ENCODE measurements at regions of chr12 and their contacts with region 1.

Region 1: DNA sequence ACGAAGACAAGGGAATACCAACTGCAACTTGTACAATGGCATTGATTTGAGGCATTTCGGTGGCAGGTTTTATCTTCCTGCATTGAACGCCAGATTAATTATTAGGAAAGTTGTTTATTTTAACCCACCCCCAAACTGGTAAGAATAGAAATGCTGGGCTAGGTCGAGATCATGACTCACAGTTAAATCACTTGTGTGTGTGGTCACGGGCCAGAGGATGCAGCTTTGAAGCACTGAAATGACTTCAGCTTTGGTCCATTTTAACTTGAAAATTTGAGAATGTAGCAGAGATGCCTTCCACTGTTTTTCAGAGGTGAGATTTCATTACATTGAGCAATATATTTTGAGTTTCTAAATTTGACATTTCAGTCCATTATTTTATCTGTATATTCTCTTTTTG is 23.6 kb upstream of the KCNH3 start:
- DNase-seq: no peak
- H3K4me3 ChIP-seq: no peak overlapping the region
- H3K27ac ChIP-seq: no peak overlapping the region
- H3K4me1 ChIP-seq: no peaks in the 10 kb centered on the region
- H3K27me3 ChIP-seq: no peaks in the 10 kb centered on the region
- CTCF ChIP-seq: no peak
- EP300 ChIP-seq: no peak
- POLR2A ChIP-seq: no peak

Region 2: DNA sequence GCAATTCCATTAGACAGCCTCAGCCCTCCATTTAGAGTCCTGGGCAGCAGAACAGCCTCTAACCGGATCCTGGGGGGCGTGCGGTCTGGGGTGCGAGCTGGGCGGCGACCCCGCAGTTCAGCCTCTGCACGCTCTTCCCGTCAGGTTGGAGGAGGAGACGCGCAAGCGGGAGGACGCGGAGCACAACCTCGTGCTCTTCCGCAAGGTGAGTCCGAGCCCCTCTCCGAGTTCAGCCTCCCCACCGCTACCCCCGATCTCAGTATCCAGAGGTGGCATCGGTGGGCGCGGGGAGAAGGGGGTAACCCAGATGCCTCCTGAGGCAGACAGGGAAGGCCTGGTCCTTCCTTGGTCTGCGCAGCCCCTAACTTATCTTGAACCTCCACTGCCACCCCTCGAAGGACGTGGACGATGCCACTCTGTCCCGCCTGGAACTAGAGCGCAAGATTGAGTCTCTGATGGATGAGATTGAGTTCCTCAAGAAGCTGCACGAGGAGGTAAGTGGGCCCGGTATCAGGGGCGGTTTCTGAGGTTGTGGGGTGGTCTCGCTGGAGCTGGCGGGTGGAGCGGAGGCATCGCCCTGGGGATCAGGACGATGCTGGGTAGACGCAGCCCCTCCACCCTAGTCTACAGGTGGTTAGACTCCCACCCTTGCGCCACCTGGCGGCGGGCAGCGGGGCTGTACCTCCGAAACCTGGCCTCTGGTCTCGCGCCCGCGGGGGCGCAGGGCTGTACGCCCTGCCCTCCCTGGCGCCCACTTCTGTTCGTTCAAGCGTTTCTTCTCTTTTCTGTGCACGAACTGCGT is 219.0 kb before region 1 on chr12:
- intact Hi-C with region 1: loop called in 2 of 4 experiments (anchors 10 kb)
- DNase-seq: peak in 2 of 5 donors; percentile 44 to 60
- H3K4me3 ChIP-seq: no peak overlapping the region
- H3K27ac ChIP-seq: no peak overlapping the region
- H3K4me1 ChIP-seq: peaks cover 8% of the 10 kb centered on the region
- H3K27me3 ChIP-seq: peaks cover 5% of the 10 kb centered on the region
- CTCF ChIP-seq: peak in 1 of 3 donors; percentile 34
- EP300 ChIP-seq: no peak
- POLR2A ChIP-seq: no peak

Region 3: DNA sequence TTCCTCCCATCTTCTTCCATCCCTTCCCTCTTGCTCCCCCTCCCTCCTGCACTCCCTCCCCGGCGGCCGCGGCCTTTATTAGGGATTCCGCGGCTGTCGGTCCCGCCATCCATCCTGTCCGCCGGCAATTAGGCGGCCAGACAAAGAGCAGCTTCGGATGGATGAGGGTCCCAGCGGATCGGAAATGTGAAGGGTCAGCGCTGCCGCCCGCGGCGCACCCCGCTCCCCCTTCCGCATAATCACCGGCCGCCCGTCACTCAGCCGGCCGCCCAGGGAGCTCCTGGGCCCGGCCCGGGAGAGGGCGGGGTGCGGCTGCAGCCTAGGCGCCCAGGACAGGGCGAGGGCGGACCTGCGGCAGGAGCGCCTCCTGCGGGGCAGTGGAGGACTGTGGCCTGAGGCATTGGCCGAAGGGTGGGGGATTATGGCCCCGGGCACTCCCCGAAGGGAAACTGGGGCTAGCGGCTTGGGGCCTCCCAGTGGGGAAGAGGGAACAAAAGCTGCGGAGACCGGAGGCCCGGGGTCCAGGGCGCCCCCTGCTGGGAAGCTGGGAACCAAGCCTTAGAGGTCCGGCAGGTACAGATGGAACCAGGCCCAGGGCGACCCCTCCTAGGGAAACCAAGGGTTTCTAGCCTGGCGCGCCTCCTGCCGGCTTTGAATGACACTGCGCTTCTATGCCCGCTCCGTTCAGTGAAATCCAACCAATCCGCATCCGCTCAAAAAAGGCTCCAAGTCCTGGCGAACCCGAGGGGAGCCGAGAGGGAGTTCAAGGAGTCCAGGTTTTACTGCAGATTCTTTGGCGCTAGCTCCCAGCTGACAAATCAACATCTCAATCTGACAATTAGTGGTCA is 173.0 kb before region 1 on chr12:
- intact Hi-C with region 1: loop called in 2 of 4 experiments (anchors 5 to 10 kb)
- DNase-seq: peak; percentile 68 to 85 (median 80)
- H3K4me3 ChIP-seq: peak overlapping the region; percentile 48
- H3K27ac ChIP-seq: no peak overlapping the region
- H3K4me1 ChIP-seq: peaks cover 8% of the 10 kb centered on the region
- H3K27me3 ChIP-seq: peaks cover 7% of the 10 kb centered on the region
- CTCF ChIP-seq: peak; percentile 64 to 67 (median 64)
- EP300 ChIP-seq: no peak
- POLR2A ChIP-seq: no peak

Region 4: GRCh38 chr12:49347384-49348237 is 167.7 kb before region 1 on chr12:
- intact Hi-C with region 1: loop called in 2 of 4 experiments (anchors 5 to 10 kb)
- DNase-seq: peak; percentile 63 to 84 (median 76)
- H3K4me3 ChIP-seq: peak overlapping the region; percentile 9
- H3K27ac ChIP-seq: no peak overlapping the region
- H3K4me1 ChIP-seq: peaks cover 16% of the 10 kb centered on the region
- H3K27me3 ChIP-seq: peaks cover 22% of the 10 kb centered on the region
- CTCF ChIP-seq: peak; percentile 63 to 74 (median 70)
- EP300 ChIP-seq: no peak
- POLR2A ChIP-seq: no peak

Region 5: DNA sequence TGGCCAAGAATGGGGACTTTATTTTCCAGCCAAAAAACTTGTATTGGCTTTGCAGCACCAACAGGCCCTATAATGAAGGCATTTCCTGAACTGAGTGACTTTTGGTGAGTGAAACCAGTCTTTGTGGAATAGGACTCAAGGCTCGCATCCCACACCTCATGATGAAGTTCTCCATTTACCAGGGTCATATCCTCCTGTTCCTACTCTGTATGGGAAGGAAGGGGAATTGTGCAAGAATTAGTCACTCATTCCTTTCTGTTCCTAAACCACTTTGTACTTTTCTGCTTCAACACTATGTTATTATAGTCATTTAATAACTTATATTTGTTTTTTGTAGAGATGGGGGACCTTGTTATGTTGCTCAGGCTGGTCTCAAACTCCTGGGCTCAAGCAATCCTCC is 150.3 kb before region 1 on chr12:
- intact Hi-C with region 1: loop called in 2 of 4 experiments (anchors 5 kb)
- DNase-seq: no peak
- H3K4me3 ChIP-seq: no peak overlapping the region
- H3K27ac ChIP-seq: no peak overlapping the region
- H3K4me1 ChIP-seq: peaks cover 8% of the 10 kb centered on the region
- H3K27me3 ChIP-seq: no peaks in the 10 kb centered on the region
- CTCF ChIP-seq: no peak
- EP300 ChIP-seq: no peak
- POLR2A ChIP-seq: no peak

Measured in ovary (tissue), 10 donors.